ENCODE measurements at regions of chr15 and their contacts with region 1.

Region 1: GRCh38 chr15:93018580-93018979 is 70.4 kb downstream of the RGMA start:
- DNase-seq: no peak
- ATAC-seq: no peak

Region 2: GRCh38 chr15:92797168-92797951 is 221.2 kb before region 1 on chr15:
- intact Hi-C with region 1: loop called (anchors 10 kb)
- DNase-seq: no peak
- ATAC-seq: peak; percentile 62

Region 3: DNA sequence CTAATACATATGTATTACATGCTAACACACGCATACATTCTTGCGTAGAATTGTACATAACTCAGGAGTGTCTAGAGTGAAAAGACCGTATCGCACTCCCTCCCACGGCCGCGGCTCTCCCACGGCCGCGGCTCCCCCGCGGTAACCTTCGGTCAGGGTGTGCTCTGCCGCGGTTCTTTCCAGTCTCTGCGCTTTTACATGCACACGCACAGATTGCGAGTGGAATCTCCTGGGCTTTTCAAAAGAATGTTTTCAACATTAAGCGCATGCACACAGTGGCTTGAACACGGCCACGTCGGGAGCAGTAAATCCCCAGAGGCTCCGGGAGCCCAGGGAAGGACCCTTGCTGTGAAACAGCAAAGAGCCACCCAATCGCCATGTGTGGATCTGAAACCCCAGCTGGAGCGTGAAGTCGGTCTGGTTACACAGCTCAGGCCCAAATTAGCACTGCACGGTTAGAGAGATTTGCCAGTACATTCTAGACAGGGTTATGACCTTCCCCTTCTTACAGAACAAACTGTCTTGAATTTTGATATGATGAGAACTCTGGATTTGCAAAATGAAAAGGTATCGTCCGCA is 71.2 kb after region 1 on chr15:
- intact Hi-C with region 1: no loop called
- DNase-seq: peak; percentile 62
- ATAC-seq: peak; percentile 82

Measured in left ventricle myocardium superior (tissue), 1 donor.